Activated B cell treated with CpG ODN at 0.5 μM for 24 hours (primary cell): ENCODE measurements at regions of chr1 and their contacts with region 1.

Region 1: DNA sequence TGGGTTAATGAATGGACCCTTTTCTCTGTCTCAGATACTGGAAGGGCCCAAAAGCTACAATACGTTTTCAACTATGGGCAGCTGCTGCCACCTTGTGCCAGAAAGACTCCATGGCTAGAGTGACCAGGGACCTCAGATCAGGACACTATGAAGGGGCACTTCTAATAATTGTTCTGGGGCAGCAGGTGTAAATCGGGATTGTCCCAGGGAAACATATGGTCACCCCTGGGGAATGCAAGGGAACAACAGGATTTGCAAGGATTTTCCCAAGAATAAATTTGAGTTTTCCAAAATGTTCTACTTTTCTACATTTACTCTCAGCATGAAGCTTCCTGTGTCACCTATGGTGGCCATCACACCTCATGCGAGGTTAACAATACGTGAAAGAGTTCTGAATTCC is 12.0 kb upstream of the FCAMR start:
- DNase-seq: peak; percentile 52
- ATAC-seq: peak; percentile 91
- H3K4me3 Mint-ChIP-seq: no peak overlapping the region
- H3K27ac Mint-ChIP-seq: no peak overlapping the region
- H3K4me1 Mint-ChIP-seq: no peaks in the 10 kb centered on the region
- H3K27me3 Mint-ChIP-seq: peaks cover 5% of the 10 kb centered on the region
- CTCF ChIP-seq: no peak

Region 2: GRCh38 chr1:206612129-206612876 is 369.9 kb before region 1 on chr1 and contains the start of gene EIF2D:
- CTCF ChIA-PET with region 1: interaction called, 20 read pairs
- POLR2A ChIA-PET with region 1: no interaction called
- intact Hi-C with region 1: loop called (anchors 1 kb)
- DNase-seq: peak; percentile 95
- ATAC-seq: peak; percentile 98
- H3K4me3 Mint-ChIP-seq: peak within 1 kb of the TSS; percentile 96
- H3K27ac Mint-ChIP-seq: peak within 1 kb of the TSS; percentile 97
- H3K4me1 Mint-ChIP-seq: peaks cover 30% of the 10 kb centered on the region
- H3K27me3 Mint-ChIP-seq: no peaks in the 10 kb centered on the region
- CTCF ChIP-seq: peak; percentile 72
- total RNA-seq, gene EIF2D: 61.2 and 65.4 TPM in 2 replicates

Region 3: DNA sequence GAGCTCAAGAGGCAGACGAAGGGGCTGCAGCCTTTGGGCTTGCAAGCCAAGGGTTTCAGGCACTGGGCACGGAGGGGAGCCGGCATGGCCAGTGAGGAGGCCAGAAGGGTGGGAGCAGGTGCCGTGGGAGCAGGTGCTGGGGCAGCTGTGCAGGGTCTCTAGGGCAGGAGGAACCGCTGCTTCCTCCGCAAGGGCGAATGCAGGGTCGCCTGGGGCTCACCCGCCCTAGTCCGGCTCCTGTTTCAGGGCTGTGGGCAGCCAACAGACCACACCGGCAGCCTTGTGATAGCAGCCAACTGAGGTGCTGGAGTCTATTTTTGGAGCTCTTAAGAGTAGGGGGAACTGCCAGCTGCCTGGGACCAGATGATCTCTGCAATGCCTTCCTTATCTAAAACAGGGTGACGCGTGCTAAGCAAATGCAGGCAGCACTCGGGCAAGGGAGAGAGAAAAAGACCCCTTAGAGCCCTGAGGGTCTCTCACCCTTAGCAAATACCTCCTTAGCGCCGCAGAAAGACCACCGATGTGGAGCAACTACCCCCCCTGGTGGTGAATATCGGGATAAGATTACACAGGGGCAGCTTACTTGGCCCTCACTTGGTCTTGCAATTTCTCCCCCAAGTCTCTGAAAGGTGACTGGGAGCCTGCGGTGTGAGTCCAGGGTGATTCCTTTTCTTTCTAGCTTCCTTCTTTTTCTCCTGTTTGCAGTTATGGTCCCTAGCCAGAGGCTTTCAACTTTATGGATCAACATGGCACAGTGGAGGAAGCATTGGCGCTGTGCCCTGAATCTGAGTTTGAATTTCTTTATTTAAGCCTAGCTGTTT is 318.2 kb before region 1 on chr1:
- CTCF ChIA-PET with region 1: interaction called, 19 read pairs
- POLR2A ChIA-PET with region 1: no interaction called
- intact Hi-C with region 1: no loop called
- DNase-seq: peak; percentile 49
- ATAC-seq: peak; percentile 89
- H3K4me3 Mint-ChIP-seq: peak overlapping the region; percentile 47
- H3K27ac Mint-ChIP-seq: no peak overlapping the region
- H3K4me1 Mint-ChIP-seq: peaks cover 16% of the 10 kb centered on the region
- H3K27me3 Mint-ChIP-seq: peaks cover 17% of the 10 kb centered on the region
- CTCF ChIP-seq: peak; percentile 62

Region 4: DNA sequence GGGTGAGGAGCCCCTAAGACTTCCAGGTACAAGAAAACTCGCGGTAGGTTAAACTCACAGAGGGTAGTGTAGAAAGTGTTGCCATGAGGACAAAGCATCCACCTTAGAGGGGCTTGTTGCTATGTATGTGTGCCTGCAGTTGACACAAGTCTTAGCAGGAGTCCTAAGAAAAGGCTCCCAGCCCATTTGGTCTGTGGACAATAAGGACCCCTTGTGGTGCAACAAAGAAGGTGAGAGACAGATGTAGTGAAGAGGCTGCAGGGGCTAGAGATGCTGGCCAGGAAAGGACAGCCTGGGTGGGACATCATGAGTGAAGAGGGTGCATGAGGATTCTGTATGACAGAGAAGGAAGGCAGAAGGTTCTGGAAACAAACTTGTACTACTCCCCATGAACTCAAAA is 173.6 kb before region 1 on chr1:
- CTCF ChIA-PET with region 1: interaction called, 89 read pairs
- POLR2A ChIA-PET with region 1: interaction called, 5 read pairs
- intact Hi-C with region 1: loop called (anchors 1 kb)
- DNase-seq: no peak
- ATAC-seq: peak; percentile 94
- H3K4me3 Mint-ChIP-seq: no peak overlapping the region
- H3K27ac Mint-ChIP-seq: no peak overlapping the region
- H3K4me1 Mint-ChIP-seq: peaks cover 32% of the 10 kb centered on the region
- H3K27me3 Mint-ChIP-seq: no peaks in the 10 kb centered on the region
- CTCF ChIP-seq: no peak

Region 5: DNA sequence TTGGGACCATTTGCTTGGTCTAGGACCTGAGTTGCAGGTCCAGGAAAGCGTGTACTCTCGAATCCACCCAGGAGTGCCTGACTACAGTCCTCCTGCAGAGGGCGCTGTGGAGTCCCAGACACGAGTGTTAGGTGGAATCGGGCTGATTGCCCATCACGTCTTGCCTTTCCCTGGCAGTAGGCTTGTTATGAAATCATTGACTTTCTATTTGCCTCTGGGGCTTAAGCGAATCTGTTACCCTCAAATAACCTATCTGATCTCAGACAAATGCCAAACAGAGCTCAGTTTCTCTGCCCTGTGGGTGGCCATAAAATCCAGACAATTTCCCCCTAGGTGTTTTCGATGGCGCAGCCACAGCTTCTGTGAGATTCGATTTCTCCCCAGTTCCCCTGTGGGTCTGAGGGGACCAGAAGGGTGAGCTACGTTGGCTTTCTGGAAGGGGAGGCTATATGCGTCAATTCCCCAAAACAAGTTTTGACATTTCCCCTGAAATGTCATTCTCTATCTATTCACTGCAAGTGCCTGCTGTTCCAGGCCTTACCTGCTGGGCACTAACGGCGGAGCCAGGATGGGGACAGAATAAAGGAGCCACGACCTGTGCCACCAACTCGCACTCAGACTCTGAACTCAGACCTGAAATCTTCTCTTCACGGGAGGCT is 117.1 kb before region 1 on chr1 and contains the start of gene IL20:
- CTCF ChIA-PET with region 1: interaction called, 12 read pairs
- POLR2A ChIA-PET with region 1: no interaction called
- intact Hi-C with region 1: loop called (anchors 1 kb)
- DNase-seq: peak; percentile 72
- ATAC-seq: peak; percentile 90
- H3K4me3 Mint-ChIP-seq: no peak within 1 kb of the TSS
- H3K27ac Mint-ChIP-seq: no peak within 1 kb of the TSS
- H3K4me1 Mint-ChIP-seq: peaks cover 6% of the 10 kb centered on the region
- H3K27me3 Mint-ChIP-seq: peaks cover 26% of the 10 kb centered on the region
- CTCF ChIP-seq: peak; percentile 43
- total RNA-seq, gene IL20: not detected in 2 replicates

Region 6: GRCh38 chr1:206941858-206942387 is 40.3 kb before region 1 on chr1:
- CTCF ChIA-PET with region 1: interaction called, 72 read pairs
- POLR2A ChIA-PET with region 1: no interaction called
- intact Hi-C with region 1: no loop called
- DNase-seq: no peak
- ATAC-seq: no peak
- H3K4me3 Mint-ChIP-seq: no peak overlapping the region
- H3K27ac Mint-ChIP-seq: no peak overlapping the region
- H3K4me1 Mint-ChIP-seq: no peaks in the 10 kb centered on the region
- H3K27me3 Mint-ChIP-seq: peaks cover 14% of the 10 kb centered on the region
- CTCF ChIP-seq: no peak

Region 7: GRCh38 chr1:207017615-207018559 is 35.7 kb after region 1 on chr1:
- CTCF ChIA-PET with region 1: no interaction called
- POLR2A ChIA-PET with region 1: no interaction called
- intact Hi-C with region 1: no loop called
- DNase-seq: no peak
- ATAC-seq: no peak
- H3K4me3 Mint-ChIP-seq: no peak overlapping the region
- H3K27ac Mint-ChIP-seq: no peak overlapping the region
- H3K4me1 Mint-ChIP-seq: no peaks in the 10 kb centered on the region
- H3K27me3 Mint-ChIP-seq: peaks cover 14% of the 10 kb centered on the region
- CTCF ChIP-seq: no peak